ENCODE measurements at regions of chr17 and their contacts with region 1.

Region 1: GRCh38 chr17:59829217-59830006 is 63.3 kb downstream of the TUBD1 start:
- DNase-seq: peak in 3 of 14 experiments; percentile 73 to 88 (median 81)
- ATAC-seq: peak; percentile 75
- H3K4me3 ChIP-seq: peak overlapping the region; percentile 33
- H3K4me3 Mint-ChIP-seq: peak overlapping the region; percentile 70
- H3K27ac ChIP-seq: peak overlapping the region; percentile 25 to 63
- H3K27ac Mint-ChIP-seq: peak overlapping the region; percentile 85
- H3K4me1 ChIP-seq: peaks cover 54% of the 10 kb centered on the region
- H3K4me1 Mint-ChIP-seq: peaks cover 66% of the 10 kb centered on the region
- H3K27me3 ChIP-seq: no peaks in the 10 kb centered on the region
- H3K27me3 Mint-ChIP-seq: no peaks in the 10 kb centered on the region
- CTCF ChIP-seq: no peak

Region 2: DNA sequence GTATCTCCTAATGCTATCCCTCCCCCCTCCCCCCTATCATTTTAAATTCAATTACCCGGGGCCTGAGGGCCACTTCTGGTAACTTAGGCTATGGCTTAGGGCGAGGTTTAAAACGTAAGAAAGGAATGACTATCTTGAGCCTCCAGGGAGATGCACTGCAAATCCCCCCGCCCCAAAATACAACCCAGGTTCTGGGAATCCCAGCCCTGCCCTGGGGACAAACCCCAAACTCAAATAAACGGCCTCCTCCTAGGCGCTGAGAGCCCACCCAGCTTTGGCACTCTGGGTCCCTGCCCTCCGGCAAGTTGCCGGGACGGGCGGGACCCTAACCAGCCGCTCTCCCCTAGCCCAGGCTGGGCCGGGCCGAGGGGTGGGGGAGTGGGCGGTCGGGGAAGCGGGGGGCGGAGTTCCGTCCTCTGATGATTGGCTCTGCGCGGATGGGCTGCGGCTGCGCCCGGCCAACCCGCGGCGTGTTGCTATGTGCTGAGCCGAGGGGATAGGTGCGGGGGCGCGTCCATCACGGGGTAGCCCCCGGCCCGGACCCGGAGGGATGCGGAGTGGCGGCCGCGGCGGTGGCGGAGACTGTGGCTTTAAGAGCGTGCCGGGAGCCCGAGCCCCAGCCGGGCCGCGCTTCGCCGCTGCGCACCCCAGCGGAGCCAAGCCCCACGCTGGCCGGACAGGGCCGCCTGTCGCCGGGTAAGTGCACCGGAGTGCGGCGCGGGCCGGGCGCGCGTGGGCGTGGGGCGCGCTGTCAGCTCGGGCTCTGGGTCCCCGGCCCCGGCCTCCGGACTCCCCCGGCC is 498.1 kb before region 1 on chr17 and contains the start of gene YPEL2:
- CTCF ChIA-PET with region 1: no interaction called
- POLR2A ChIA-PET with region 1: no interaction called
- intact Hi-C with region 1: no loop called
- DNase-seq: peak; percentile 78 to 94 (median 88)
- ATAC-seq: peak; percentile 83
- H3K4me3 ChIP-seq: peak within 1 kb of the TSS; percentile 92
- H3K4me3 Mint-ChIP-seq: peak within 1 kb of the TSS; percentile 96
- H3K27ac ChIP-seq: peak within 1 kb of the TSS; percentile 35 to 49
- H3K27ac Mint-ChIP-seq: peak within 1 kb of the TSS; percentile 91
- H3K4me1 ChIP-seq: peaks cover 72% of the 10 kb centered on the region
- H3K4me1 Mint-ChIP-seq: peaks cover 83% of the 10 kb centered on the region
- H3K27me3 ChIP-seq: no peaks in the 10 kb centered on the region
- H3K27me3 Mint-ChIP-seq: no peaks in the 10 kb centered on the region
- CTCF ChIP-seq: no peak
- total RNA-seq, gene YPEL2: 69.1 to 71.6 TPM

Region 3: DNA sequence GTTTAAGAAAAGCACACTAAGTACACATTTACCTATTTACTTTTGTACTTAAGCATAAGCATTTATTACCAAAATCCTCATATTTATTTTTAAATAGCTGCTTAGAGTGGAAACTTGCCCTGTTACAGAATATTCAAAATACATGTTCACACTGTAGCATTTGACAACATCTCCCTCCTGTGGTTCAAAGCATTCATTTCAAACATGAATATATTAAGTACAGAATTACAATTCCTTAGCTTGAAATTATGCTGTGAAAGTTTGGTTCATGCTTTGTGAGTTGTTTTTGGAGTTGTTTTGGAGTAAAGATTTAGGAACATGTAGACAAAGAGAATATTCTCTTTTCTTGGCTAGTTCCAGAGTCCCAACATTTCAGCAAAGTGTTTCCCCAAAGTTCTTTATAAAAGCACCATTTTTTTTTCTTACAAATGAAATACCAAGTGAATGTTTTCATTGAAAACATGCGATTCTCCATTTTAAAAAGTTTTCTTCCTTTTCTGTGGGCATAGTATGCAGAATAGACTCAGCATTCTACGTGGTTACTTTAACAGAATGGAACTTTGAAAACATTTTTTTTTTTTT is 30.1 kb after region 1 on chr17:
- CTCF ChIA-PET with region 1: interaction called, 11 read pairs
- POLR2A ChIA-PET with region 1: interaction called, 6 read pairs
- intact Hi-C with region 1: no loop called
- DNase-seq: peak in 3 of 14 experiments; percentile 67 to 71 (median 71)
- ATAC-seq: peak; percentile 73
- H3K4me3 ChIP-seq: no peak overlapping the region
- H3K4me3 Mint-ChIP-seq: no peak overlapping the region
- H3K27ac ChIP-seq: no peak overlapping the region
- H3K27ac Mint-ChIP-seq: peak overlapping the region; percentile 64
- H3K4me1 ChIP-seq: no peaks in the 10 kb centered on the region
- H3K4me1 Mint-ChIP-seq: peaks cover 5% of the 10 kb centered on the region
- H3K27me3 ChIP-seq: no peaks in the 10 kb centered on the region
- H3K27me3 Mint-ChIP-seq: no peaks in the 10 kb centered on the region
- CTCF ChIP-seq: peak; percentile 60

Measured in CD4-positive, alpha-beta T cell (primary cell).